PC-9 (cell line): ENCODE measurements at regions of chr5 and their contacts with region 1.

Region 1: DNA sequence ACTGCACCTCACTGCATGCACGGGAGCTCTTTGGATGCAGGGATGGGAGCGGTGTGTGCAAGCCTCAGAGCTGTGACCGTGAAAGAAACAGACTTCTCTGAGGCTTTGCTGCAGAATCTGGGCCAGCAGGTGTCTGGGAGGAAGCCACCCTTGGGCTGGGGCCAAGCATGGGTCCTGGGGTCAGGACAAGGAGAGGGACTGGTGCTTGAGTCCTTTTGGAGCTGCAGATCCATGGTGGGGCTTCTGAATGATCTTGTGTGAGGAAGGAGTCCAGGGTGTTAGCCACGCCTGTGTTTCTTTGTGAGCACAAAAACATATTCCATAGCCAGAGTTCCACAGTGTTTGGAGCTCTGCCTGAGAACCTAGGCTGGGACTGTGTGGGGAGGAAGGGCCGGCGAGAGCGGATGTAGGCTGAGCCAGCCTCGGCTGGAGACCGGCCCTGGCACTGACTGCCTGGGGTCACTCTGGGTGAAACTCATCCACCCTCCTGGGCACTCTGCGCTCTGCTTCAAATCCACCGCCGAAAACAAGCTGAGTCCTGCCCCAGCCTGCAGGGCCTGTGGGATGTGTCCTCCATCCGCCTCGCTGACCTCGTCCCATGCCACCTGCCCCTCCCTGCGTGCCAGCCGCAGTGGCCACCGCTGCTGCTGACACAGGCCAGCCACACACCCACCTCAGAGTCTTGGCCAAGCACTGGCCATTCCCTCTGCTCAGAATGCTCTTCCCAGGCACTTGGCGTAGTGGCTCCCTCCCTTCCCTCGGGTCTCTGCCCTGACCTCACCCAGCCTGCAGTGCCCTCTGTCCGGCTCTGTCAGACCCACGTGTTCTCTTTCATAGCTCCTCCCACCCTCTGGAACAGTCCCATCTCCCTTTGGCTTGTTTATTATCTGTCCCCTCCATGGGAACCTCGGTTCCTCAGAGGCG is 26.7 kb downstream of the ERGIC1 start:
- DNase-seq: peak; percentile 64 to 90
- H3K4me3 ChIP-seq: no peak overlapping the region
- H3K27ac ChIP-seq: peak overlapping the region; percentile 99
- H3K4me1 ChIP-seq: peaks cover 65% of the 10 kb centered on the region
- H3K27me3 ChIP-seq: no peaks in the 10 kb centered on the region
- CTCF ChIP-seq: no peak

Region 2: GRCh38 chr5:172795318-172795977 is 65.3 kb before region 1 on chr5:
- CTCF ChIA-PET with region 1: no interaction called
- POLR2A ChIA-PET with region 1: no interaction called
- intact Hi-C with region 1: loop called (anchors 2 kb)
- DNase-seq: no peak
- H3K4me3 ChIP-seq: no peak overlapping the region
- H3K27ac ChIP-seq: no peak overlapping the region
- H3K4me1 ChIP-seq: peaks cover 46% of the 10 kb centered on the region
- H3K27me3 ChIP-seq: no peaks in the 10 kb centered on the region
- CTCF ChIP-seq: no peak

Region 3: DNA sequence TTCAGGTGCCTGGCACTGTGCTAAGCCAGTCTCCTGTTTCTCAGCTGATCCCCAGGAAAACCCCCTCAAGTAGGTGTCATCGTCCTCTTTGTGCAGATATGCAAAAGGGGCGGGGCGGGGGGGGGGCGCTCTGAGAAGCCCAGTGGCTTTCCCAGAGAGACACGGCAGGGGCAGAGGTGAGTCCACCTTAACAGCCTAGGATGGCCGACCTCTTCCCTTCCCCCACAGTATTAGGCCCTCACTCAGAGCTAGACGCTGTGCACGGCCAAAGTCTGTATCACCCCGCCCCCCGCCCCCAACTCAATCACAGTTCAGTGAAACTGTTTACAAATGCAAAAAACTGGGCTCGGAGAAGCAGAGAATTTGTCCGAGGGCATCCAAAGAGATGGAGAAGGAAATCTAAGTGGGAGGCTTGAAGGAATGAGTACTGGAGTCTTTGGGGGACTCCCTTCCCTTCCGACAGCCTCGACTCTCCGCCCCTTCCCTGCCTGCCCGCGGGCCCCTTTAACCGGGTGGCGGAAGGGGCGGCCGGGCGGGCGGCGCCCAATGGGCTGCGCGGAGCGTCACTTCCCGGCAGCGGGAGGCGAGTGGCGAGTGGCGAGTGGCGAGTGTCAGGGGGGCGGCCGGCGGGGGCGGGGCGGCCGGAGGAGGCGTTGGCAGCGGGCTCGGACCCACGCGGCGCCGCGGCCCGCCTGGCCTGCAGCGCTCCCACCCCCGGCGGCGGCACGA is 26.9 kb before region 1 on chr5 and contains the start of gene ERGIC1:
- CTCF ChIA-PET with region 1: interaction called, 3 read pairs
- POLR2A ChIA-PET with region 1: no interaction called
- intact Hi-C with region 1: loop called (anchors 2 kb)
- DNase-seq: peak; percentile 64 to 88
- H3K4me3 ChIP-seq: peak within 1 kb of the TSS; percentile 85
- H3K27ac ChIP-seq: peak within 1 kb of the TSS; percentile 63
- H3K4me1 ChIP-seq: peaks cover 20% of the 10 kb centered on the region
- H3K27me3 ChIP-seq: no peaks in the 10 kb centered on the region
- CTCF ChIP-seq: no peak
- total RNA-seq, gene ERGIC1: 106 and 159 TPM in 2 replicates